ENCODE measurements at regions of chr12 and their contacts with region 1.

Region 1: DNA sequence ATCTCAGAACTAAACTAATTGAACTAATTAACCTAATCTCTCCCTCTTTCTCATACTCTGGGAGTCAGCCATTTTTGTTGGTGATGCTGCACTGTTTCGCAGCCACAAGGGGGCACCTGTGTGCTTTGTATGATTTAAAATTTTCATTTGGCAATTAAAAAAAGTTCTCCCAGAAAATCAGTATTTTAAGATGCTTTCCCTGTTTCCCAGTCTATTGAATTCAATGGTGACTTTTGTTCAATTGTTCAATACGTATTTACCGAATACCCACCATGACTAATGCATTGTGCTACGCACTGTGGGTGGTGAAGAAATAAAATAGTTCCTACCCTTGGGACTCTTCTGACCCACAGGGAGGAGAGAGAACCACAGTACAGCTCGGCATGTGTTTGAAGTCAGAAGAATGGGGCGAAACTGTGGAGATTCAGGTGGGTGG is 63.7 kb downstream of the ZNF664 start:
- DNase-seq: no peak
- H3K4me3 ChIP-seq: no peak overlapping the region
- H3K27ac ChIP-seq: no peak overlapping the region
- H3K4me1 ChIP-seq: no peaks in the 10 kb centered on the region
- H3K27me3 ChIP-seq: no peaks in the 10 kb centered on the region
- CTCF ChIP-seq: peak; percentile 85 to 88 (median 85)

Region 2: GRCh38 chr12:123519141-123520001 is 517.3 kb before region 1 on chr12:
- intact Hi-C with region 1: no loop called
- DNase-seq: peak; percentile 26 to 91
- H3K4me3 ChIP-seq: peak overlapping the region; percentile 29 to 50
- H3K27ac ChIP-seq: peak overlapping the region; percentile 72 to 82
- H3K4me1 ChIP-seq: peaks cover 6 to 15% of the 10 kb centered on the region in 2 donors
- H3K27me3 ChIP-seq: no peaks in the 10 kb centered on the region
- CTCF ChIP-seq: peak in 1 of 3 experiments; percentile 5

Region 3: GRCh38 chr12:123905319-123905925 is 131.3 kb before region 1 on chr12:
- intact Hi-C with region 1: loop called (anchors 2 kb)
- DNase-seq: peak in 1 of 2 donors; percentile 81
- H3K4me3 ChIP-seq: no peak overlapping the region
- H3K27ac ChIP-seq: no peak overlapping the region
- H3K4me1 ChIP-seq: no peaks in the 10 kb centered on the region
- H3K27me3 ChIP-seq: no peaks in the 10 kb centered on the region
- CTCF ChIP-seq: peak; percentile 58 to 73 (median 61)

Region 4: DNA sequence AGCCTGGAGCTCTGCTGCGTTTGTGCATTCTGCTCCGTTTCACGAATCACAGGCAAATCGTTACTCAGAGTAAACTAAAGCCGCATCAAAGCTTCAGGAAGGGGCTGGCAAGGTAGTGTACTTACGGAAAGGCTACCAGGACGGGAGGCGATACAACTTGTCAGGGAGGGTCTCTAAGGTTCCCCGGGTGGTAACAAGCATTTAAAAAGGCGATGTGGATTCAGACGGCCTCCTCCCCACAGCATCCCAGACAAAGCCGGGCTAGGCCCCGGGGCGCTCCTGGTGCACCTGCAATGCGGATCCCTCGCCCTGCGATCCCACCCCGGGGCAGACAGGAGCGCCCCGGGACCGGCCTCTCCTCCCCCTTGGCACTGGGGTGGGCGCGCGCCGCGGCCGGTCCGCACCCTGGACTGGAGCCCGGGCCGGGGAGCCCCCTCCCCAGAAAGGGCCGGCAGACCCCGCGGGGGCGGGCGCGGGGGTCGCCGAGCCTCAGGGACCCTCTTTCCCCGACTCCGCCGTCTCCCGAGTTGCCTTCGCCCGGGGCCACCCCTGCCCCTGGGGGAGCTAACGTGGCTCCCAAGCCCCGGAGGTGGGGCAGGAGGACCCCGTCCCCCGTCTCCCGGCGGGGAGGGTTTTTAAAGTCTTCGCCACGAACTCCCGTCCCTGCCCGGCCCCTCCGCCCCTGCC is 64.8 kb before region 1 on chr12:
- intact Hi-C with region 1: no loop called
- DNase-seq: no peak
- H3K4me3 ChIP-seq: peak overlapping the region; percentile 72 to 91
- H3K27ac ChIP-seq: peak overlapping the region; percentile 97
- H3K4me1 ChIP-seq: peaks cover 4 to 25% of the 10 kb centered on the region in 2 donors
- H3K27me3 ChIP-seq: no peaks in the 10 kb centered on the region
- CTCF ChIP-seq: no peak

Region 5: DNA sequence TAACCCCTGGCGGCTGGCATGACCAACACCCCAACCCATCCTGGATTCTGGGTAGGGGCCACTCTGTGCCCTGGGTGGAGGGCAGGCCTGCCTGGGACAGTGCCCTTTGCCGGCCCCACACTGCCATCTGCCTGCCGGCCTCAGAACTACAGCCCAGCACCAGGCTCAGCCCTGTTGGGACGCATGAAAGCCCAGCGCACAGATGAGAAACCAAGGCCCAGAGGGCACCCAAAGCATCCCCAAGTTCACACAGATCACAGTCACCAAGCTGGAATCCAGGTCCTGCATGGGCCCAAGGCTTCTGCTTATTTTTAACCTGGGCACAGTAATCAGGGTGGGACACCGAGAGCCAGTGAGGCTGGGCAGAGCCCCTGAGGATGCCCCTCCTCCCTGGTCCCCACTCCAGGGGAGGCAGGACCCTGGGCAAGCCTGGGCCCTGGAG is 284.4 kb after region 1 on chr12:
- intact Hi-C with region 1: loop called (anchors 1 kb)
- DNase-seq: peak in 1 of 2 donors; percentile 82
- H3K4me3 ChIP-seq: no peak overlapping the region
- H3K27ac ChIP-seq: peak overlapping the region in 1 of 2 donors; percentile 5
- H3K4me1 ChIP-seq: peaks cover 3 to 8% of the 10 kb centered on the region in 2 donors
- H3K27me3 ChIP-seq: no peaks in the 10 kb centered on the region
- CTCF ChIP-seq: peak; percentile 90 to 97 (median 96)

Region 6: GRCh38 chr12:124829008-124829707 is 792.5 kb after region 1 on chr12:
- intact Hi-C with region 1: no loop called
- DNase-seq: no peak
- H3K4me3 ChIP-seq: no peak overlapping the region
- H3K27ac ChIP-seq: no peak overlapping the region
- H3K4me1 ChIP-seq: no peaks in the 10 kb centered on the region
- H3K27me3 ChIP-seq: no peaks in the 10 kb centered on the region
- CTCF ChIP-seq: no peak

Measured in ascending aorta (tissue), 2 donors.